ENCODE measurements at regions of chr1 and their contacts with region 1.

Region 1: GRCh38 chr1:178629252-178630154 is 95.5 kb upstream of the RALGPS2 start:
- DNase-seq: no peak
- ATAC-seq: peak; percentile 59
- H3K4me3 ChIP-seq: no peak overlapping the region
- H3K27ac ChIP-seq: no peak overlapping the region
- H3K4me1 ChIP-seq: peaks cover 46% of the 10 kb centered on the region
- H3K27me3 ChIP-seq: no peaks in the 10 kb centered on the region
- CTCF ChIP-seq: no peak
- EP300 ChIP-seq: no peak
- POLR2A ChIP-seq: no peak
- RAD21 ChIP-seq: no peak

Region 2: GRCh38 chr1:178684542-178685000 is 55.1 kb after region 1 on chr1:
- CTCF ChIA-PET with region 1: no interaction called
- POLR2A ChIA-PET with region 1: no interaction called
- in situ Hi-C with region 1: no loop called
- intact Hi-C with region 1: loop called (anchors 10 kb)
- DNase-seq: peak; percentile 52
- ATAC-seq: no peak
- H3K4me3 ChIP-seq: no peak overlapping the region
- H3K27ac ChIP-seq: peak overlapping the region; percentile 25
- H3K4me1 ChIP-seq: peaks cover 41% of the 10 kb centered on the region
- H3K27me3 ChIP-seq: no peaks in the 10 kb centered on the region
- CTCF ChIP-seq: no peak
- EP300 ChIP-seq: peak in 1 of 2 experiments; percentile 62; a peak in 1 of 4 replicates
- POLR2A ChIP-seq: no peak
- RAD21 ChIP-seq: no peak

Measured in HepG2 (cell line).